ENCODE measurements at regions of chr9 and their contacts with region 1.

Region 1: GRCh38 chr9:121305269-121305994 is 37.5 kb downstream of the GSN start:
- DNase-seq: no peak
- ATAC-seq: no peak
- H3K4me3 ChIP-seq: no peak overlapping the region
- H3K27ac ChIP-seq: no peak overlapping the region
- H3K4me1 ChIP-seq: peaks cover 59% of the 10 kb centered on the region
- H3K27me3 ChIP-seq: no peaks in the 10 kb centered on the region
- CTCF ChIP-seq: no peak
- EP300 ChIP-seq: no peak
- POLR2A ChIP-seq: no peak
- RAD21 ChIP-seq: no peak

Region 2: GRCh38 chr9:121233906-121234901 is 71.2 kb before region 1 on chr9:
- CTCF ChIA-PET with region 1: no interaction called
- POLR2A ChIA-PET with region 1: no interaction called
- in situ Hi-C with region 1: no loop called
- intact Hi-C with region 1: loop called (anchors 2 kb)
- DNase-seq: no peak
- ATAC-seq: peak; percentile 30; the same call in 2 of the 3 replicates
- H3K4me3 ChIP-seq: no peak overlapping the region
- H3K27ac ChIP-seq: no peak overlapping the region
- H3K4me1 ChIP-seq: peaks cover 24% of the 10 kb centered on the region
- H3K27me3 ChIP-seq: peaks cover 0 to 6% of the 10 kb centered on the region in 2 experiments; a peak in 1 of 5 replicates
- CTCF ChIP-seq: no peak
- EP300 ChIP-seq: no peak
- POLR2A ChIP-seq: no peak
- RAD21 ChIP-seq: no peak